Activated CD4-positive, alpha-beta T cell treated with anti-CD3 and anti-CD28 coated beads, Interleukin-2, amount 10 ng/mL, durations not matched to agents 24 days and 14 days (primary cell): ENCODE measurements at regions of chr15 and their contacts with region 1.

Region 1: DNA sequence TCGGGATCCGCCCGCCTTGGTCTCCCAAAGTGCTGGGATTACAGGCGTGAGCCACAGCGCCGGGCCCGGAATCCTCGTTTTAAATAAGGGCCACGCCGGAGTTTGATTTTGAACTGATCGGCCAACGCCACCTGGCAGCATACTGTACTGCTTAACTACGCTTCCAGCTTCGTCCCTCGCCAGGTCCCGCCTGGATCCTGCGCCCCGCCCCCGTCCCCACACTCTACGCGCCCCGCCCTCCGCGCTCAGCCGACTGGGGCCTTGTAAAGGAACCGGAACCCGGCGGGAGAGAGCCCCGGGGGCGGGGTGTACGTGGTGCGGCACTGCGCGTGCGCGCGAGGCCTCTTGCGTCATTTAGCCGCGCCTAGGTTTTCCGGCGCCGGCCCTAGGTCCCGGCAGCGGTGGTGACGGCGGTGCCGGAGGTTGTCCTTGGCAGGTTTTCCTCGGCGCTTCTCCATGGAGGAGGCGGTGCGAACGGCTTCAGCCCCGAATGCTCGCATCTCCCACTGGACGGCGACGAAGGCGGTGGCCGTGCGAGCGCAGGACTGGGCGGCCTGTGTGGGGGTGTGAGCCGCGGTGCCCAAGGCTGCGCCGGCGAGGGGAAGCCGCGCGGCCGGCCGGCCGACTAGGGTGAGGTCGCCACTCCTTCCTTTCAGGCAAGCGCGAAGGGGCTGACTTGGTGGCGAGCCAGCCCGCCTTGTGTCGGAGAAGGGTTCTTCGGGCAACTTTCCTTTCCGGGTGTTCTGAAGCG is at the start of gene NIPA2:
- DNase-seq: peak; percentile 100
- H3K4me3 Mint-ChIP-seq: peak within 1 kb of the TSS; percentile 98
- H3K27ac Mint-ChIP-seq: peak within 1 kb of the TSS; percentile 95
- H3K4me1 Mint-ChIP-seq: peaks cover 22% of the 10 kb centered on the region
- H3K27me3 Mint-ChIP-seq: peaks cover 7% of the 10 kb centered on the region
- total RNA-seq, gene NIPA2: 74.3 and 79.3 TPM in 2 replicates

Region 2: DNA sequence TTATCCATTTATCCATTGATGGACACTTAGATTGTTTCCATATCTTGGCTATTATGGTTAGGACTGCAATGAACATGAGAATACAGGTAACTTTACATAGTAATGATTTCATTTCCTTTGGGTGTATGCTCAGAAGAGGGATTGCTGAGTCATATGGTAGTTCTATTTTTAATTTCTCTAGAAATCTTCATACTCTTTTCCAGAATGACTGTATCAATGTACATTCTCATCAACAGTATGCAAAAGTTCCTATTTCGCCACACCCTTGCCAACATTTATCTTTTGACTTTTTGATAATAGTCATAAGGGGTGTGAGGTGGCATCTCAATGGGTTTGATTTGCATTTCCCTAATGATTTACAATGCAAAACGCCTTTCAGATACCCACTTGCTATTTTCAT is 58.2 kb before region 1 on chr15:
- intact Hi-C with region 1: loop called (anchors 1 kb)
- DNase-seq: no peak
- H3K4me3 Mint-ChIP-seq: peak overlapping the region; percentile 56
- H3K27ac Mint-ChIP-seq: peak overlapping the region; percentile 77
- H3K4me1 Mint-ChIP-seq: peaks cover 29% of the 10 kb centered on the region
- H3K27me3 Mint-ChIP-seq: no peaks in the 10 kb centered on the region

Region 3: DNA sequence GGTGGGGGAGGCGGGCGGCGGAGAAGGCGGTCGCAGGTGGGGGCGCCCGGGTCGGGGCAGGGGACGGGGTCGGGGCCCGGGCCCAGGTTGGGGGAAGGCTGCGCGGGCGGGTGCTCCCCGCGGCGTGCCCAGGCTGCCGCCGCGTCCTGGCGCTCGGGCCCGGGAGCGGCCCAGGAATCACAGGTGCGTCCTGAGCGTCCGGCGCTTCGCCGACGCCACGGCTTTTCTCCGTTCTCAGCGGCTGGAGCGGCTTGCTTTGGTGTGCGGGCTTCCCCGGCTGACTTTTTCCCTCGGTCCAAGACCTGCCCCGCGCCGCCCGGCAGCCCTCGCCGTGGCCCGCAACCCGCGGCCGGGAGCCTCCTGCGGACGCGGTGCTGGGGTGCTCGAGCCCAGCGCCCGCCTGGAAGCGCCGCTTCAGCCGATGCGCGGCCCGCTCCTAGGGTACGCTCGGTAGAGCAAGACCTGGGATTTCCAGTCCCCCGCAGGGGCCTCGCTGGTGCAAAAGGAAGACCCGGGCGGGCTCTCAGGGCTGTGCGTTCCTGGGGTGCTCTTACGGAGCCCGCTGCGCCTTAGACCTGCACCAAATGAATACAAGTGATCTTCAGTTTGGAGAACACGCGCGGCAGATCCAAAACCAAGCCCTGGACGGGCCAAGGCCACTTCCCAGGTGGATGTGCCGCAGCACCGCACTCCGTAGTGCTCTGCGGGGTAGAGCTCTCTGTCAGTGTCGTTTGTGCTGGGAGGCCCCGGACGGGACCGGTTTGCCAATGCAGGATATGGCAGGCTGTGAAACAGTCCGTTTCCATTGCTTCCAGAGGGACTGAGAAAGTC is 51.4 kb before region 1 on chr15:
- intact Hi-C with region 1: loop called (anchors 1 kb)
- DNase-seq: peak; percentile 75
- H3K4me3 Mint-ChIP-seq: peak overlapping the region; percentile 83
- H3K27ac Mint-ChIP-seq: peak overlapping the region; percentile 54
- H3K4me1 Mint-ChIP-seq: peaks cover 14% of the 10 kb centered on the region
- H3K27me3 Mint-ChIP-seq: peaks cover 2% of the 10 kb centered on the region

Region 4: DNA sequence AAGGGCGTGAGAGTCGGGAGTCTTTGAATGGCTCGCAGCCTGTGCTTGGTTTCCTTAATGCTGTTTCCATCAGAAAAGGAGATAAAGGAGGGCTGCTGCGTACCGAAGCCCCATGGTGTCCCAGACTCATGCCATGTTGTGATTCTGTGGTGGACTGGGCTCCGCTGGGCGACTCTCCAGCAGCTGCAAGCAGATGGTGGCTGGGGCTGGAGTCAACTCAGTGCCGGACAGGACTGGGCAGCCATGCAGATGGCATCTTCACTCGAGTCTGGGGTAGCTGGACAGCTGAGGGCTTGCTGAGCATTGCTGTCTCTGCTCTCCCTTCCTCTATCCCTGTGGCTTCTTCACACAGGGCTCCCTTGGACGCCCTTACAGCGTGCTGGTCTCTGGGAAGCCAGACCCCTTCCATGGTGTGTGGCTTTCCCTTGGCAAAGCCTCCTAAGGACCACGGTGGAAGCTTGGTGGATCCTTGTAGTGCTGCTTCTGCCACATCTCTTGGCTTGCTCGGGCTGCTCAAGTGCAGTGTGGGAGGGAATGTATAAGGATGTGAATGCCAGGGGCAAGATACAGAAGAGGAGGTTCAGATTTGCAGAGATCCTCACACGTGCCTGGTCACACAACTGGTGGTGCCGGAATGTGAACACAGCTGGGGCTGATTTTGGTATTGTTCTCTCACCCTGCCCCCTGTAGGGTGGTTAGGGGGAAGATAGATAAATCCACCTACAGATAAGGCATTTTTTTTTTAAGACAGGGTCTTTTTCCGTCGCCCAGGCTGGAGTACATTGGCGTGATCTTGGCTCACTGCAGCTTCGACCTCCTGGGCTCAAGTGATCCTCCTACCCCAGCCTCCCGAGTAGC is 43.0 kb before region 1 on chr15:
- intact Hi-C with region 1: loop called (anchors 2 kb)
- DNase-seq: no peak
- H3K4me3 Mint-ChIP-seq: no peak overlapping the region
- H3K27ac Mint-ChIP-seq: no peak overlapping the region
- H3K4me1 Mint-ChIP-seq: peaks cover 29% of the 10 kb centered on the region
- H3K27me3 Mint-ChIP-seq: no peaks in the 10 kb centered on the region

Region 5: GRCh38 chr15:23039151-23039916 is 200.9 kb after region 1 on chr15 and contains the start of gene TUBGCP5:
- intact Hi-C with region 1: loop called (anchors 1 kb)
- DNase-seq: peak; percentile 99
- H3K4me3 Mint-ChIP-seq: peak within 1 kb of the TSS; percentile 91
- H3K27ac Mint-ChIP-seq: peak within 1 kb of the TSS; percentile 94
- H3K4me1 Mint-ChIP-seq: peaks cover 23% of the 10 kb centered on the region
- H3K27me3 Mint-ChIP-seq: no peaks in the 10 kb centered on the region
- total RNA-seq, gene TUBGCP5: 23.1 and 26.3 TPM in 2 replicates